ENCODE measurements at regions of chr20 and their contacts with region 1.

Region 1: DNA sequence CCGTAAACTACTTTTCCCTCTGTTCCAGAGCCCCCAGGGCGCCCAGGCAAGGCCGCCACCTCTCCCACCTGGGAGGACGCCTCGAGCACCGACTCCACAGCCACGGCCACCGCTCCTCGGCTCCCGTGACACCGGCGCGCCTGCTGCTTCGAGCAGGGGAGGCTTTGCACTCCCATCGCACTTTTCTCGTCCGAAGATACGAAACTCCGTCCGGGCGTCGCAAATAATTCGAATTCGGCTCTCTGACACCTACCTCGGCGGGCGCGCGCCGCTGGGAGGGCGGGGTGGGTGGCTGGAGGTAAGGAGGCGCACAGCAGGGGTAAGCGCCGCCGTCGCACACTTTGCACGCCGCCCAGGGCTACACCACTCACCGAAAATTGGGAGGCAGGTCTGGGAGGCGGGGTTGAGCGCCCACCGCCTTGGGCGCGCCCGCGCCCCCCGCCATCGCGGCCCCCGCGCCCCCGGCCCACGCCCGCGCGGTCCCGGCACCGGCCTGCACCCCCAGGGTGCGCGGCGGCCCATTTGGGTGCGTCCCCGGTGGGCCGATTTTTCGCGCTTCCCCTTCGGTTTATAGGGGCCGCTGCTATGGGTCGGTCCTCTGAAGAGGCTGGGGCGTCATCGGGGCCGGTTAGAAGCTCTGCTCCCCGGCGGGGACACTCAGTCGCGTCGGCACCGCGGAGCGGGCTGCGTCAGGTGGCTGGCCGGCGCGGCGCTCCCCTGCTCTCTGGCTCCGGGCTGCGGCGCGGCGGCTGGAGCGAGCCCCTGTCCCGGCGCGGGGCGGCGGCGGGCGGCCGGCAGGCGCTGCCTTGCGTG is 36.2 kb downstream of the GNAS start:
- DNase-seq: peak; percentile 86
- H3K4me3 Mint-ChIP-seq: peak overlapping the region; percentile 77
- H3K27ac Mint-ChIP-seq: peak overlapping the region; percentile 72
- H3K4me1 Mint-ChIP-seq: peaks cover 23% of the 10 kb centered on the region
- H3K27me3 Mint-ChIP-seq: peaks cover 2% of the 10 kb centered on the region

Region 2: GRCh38 chr20:58907399-58908137 is 18.8 kb after region 1 on chr20:
- CTCF ChIA-PET with region 1: interaction called, 3 read pairs
- POLR2A ChIA-PET with region 1: interaction called, 14 read pairs
- DNase-seq: peak; percentile 75
- H3K4me3 Mint-ChIP-seq: peak overlapping the region; percentile 73
- H3K27ac Mint-ChIP-seq: peak overlapping the region; percentile 93
- H3K4me1 Mint-ChIP-seq: peaks cover 73% of the 10 kb centered on the region
- H3K27me3 Mint-ChIP-seq: no peaks in the 10 kb centered on the region

Region 3: DNA sequence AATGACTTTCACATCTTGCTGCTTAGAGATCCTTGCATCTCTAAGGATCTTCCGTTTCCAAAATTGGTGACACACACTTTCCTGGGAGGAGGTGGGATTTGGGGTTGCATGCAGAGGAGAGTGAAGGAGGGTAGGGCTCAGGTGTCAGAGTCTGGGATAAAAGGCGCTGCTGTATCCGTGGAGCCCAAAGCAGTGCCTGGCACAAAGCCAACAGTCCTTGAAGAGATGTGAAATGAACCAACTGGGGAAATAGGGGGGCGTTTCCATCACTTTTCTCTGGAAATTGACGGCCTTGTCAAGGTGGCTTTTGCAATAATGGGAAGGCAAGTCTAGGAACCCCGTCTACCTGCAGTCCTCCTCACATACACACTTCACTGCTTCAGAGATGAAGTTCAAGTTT is 32.8 kb after region 1 on chr20:
- CTCF ChIA-PET with region 1: no interaction called
- POLR2A ChIA-PET with region 1: no interaction called
- DNase-seq: no peak
- H3K4me3 Mint-ChIP-seq: no peak overlapping the region
- H3K27ac Mint-ChIP-seq: no peak overlapping the region
- H3K4me1 Mint-ChIP-seq: no peaks in the 10 kb centered on the region
- H3K27me3 Mint-ChIP-seq: peaks cover 19% of the 10 kb centered on the region